Heart left ventricle (tissue), 16 donors: ENCODE measurements at regions of chr4 and their contacts with region 1.

Region 1: GRCh38 chr4:99405433-99406115 is 29.6 kb downstream of the ADH7 start:
- DNase-seq: peak in 4 of 5 donors; percentile 39 to 68 (median 53)
- ATAC-seq: peak; percentile 62 to 86 (median 79)
- H3K4me3 ChIP-seq: no peak overlapping the region
- H3K27ac ChIP-seq: peak overlapping the region in 11 of 12 donors; percentile 35 to 80 (median 60)
- H3K4me1 ChIP-seq: peaks cover 0 to 20% (median 4%) of the 10 kb centered on the region in 12 donors
- H3K27me3 ChIP-seq: no peaks in the 10 kb centered on the region
- CTCF ChIP-seq: peak; percentile 75 to 97 (median 94)
- POLR2A ChIP-seq: no peak

Region 2: DNA sequence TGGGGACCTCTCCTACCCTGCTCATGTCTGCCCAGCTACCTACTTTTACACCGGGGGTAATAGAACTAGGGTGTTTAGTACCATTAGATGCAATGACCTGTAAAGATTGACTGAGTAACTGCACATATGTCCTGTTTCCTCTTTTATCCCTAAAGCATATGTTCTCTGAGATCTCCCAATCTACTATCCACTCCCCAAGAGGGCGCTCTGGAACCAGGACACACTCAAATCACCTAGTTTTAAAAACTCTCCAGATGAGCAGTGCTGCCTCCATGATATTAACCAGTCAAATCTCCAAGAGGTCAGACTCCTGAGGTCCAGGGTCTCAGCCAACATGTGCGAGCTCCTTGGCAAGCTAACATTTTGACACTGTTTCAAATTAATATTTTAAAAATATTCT is 660.2 kb before region 1 on chr4:
- intact Hi-C with region 1: loop called in 1 of 10 experiments (anchors 10 kb)
- DNase-seq: no peak
- ATAC-seq: peak in 3 of 4 donors; percentile 47 to 54 (median 51)
- H3K4me3 ChIP-seq: no peak overlapping the region
- H3K27ac ChIP-seq: no peak overlapping the region
- H3K4me1 ChIP-seq: no peaks in the 10 kb centered on the region
- H3K27me3 ChIP-seq: no peaks in the 10 kb centered on the region
- CTCF ChIP-seq: peak in 9 of 12 donors; percentile 8 to 42 (median 22)
- POLR2A ChIP-seq: no peak

Region 3: DNA sequence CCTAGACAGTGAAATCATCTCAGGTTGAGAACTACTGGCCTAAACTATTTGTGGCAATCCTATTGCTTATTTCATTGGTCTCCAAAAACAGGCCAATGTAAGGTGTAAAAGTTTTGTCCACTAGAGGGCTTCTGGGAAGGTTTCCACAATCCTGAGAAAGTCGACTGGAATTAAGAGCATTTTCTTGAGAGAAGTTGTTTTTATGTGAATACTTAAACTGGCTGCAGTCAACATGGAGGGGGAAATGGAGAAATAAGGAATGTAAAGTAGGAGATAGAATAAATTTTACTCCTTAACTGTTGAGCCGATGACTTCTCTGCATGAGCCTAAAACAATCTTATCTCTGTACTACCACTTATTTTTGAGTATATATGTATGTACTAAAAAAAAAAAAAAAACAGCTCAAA is 465.7 kb before region 1 on chr4:
- intact Hi-C with region 1: loop called in 5 of 10 experiments (anchors 2 to 10 kb)
- DNase-seq: no peak
- ATAC-seq: peak in 3 of 4 donors; percentile 42 to 55 (median 45)
- H3K4me3 ChIP-seq: no peak overlapping the region
- H3K27ac ChIP-seq: no peak overlapping the region
- H3K4me1 ChIP-seq: no peaks in the 10 kb centered on the region
- H3K27me3 ChIP-seq: no peaks in the 10 kb centered on the region
- CTCF ChIP-seq: peak; percentile 58 to 82 (median 70)
- POLR2A ChIP-seq: no peak

Region 4: GRCh38 chr4:99117876-99118693 is 287.5 kb before region 1 on chr4:
- intact Hi-C with region 1: loop called (anchors 1 to 5 kb)
- DNase-seq: no peak
- ATAC-seq: no peak
- H3K4me3 ChIP-seq: no peak overlapping the region
- H3K27ac ChIP-seq: no peak overlapping the region
- H3K4me1 ChIP-seq: peaks cover 0 to 3% (median 0%) of the 10 kb centered on the region in 12 donors
- H3K27me3 ChIP-seq: no peaks in the 10 kb centered on the region
- CTCF ChIP-seq: peak in 11 of 12 donors; percentile 26 to 68 (median 51)
- POLR2A ChIP-seq: no peak

Region 5: DNA sequence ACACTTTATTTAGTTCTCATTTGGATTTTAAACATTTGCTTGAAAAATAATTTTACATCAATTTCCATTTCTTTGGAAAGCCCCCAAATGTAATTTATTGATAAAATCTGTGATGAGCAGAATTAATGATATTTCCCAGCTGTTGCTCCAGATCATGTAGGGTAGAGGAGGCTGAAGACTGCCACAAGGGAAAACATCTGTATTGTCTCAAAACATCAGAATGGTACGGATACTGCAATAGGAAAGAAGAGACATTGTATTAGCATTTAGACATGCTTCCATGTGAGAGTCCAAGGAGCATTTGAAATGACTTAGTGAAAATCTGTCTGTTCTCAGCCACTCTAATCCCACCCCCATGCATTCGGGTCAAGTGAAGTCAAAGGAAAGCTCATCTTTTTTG is 129.2 kb before region 1 on chr4:
- intact Hi-C with region 1: loop called in 1 of 10 experiments (anchors 10 kb)
- DNase-seq: no peak
- ATAC-seq: peak in 2 of 4 donors; percentile 18 to 68
- H3K4me3 ChIP-seq: no peak overlapping the region
- H3K27ac ChIP-seq: peak overlapping the region in 4 of 12 donors; percentile 13 to 40 (median 23)
- H3K4me1 ChIP-seq: peaks cover 0 to 3% (median 0%) of the 10 kb centered on the region in 12 donors
- H3K27me3 ChIP-seq: no peaks in the 10 kb centered on the region
- CTCF ChIP-seq: no peak
- POLR2A ChIP-seq: no peak